ENCODE measurements at regions of chr9 and their contacts with region 1.

Region 1: DNA sequence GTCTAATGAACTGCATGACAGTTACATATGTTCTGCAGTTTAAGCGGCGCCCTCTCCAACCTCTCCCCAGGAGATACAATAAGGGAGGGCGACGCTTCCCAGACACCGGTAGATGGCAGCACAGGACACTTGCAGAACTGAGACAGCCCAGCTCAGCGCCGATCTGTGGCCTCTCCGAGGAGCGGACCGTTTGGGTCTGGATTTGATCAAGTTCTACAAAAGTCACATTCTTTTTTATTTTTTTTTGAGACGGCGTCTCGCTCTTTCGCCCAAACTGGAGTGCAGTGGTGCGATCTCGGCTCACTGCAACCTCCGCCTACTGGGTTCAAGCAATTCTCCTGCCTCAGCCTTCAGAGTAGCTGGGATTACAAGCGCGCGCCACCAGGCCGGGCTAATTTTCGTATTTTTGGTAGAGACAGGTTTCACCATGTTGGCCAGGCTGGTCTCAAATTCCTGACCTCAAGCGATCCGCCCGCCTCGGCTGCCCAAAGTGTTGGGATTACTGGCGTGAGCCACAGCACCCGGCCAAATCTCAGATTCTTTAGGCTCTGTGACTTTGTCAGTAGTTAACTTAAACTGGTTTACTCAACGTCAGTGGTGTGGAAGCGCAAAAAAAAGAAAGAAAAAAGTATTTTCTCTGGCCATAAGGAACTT is 1.4 kb upstream of the ATOSB start:
- DNase-seq: peak; percentile 67 to 91 (median 87)
- ATAC-seq: peak; percentile 77
- H3K4me3 ChIP-seq: peak overlapping the region; percentile 82
- H3K4me3 Mint-ChIP-seq: peak overlapping the region; percentile 88 to 100 (median 93)
- H3K27ac ChIP-seq: peak overlapping the region; percentile 79
- H3K27ac Mint-ChIP-seq: peak overlapping the region; percentile 89 to 98 (median 94)
- H3K4me1 ChIP-seq: peaks cover 26 to 33% of the 10 kb centered on the region in 2 donors
- H3K4me1 Mint-ChIP-seq: peaks cover 27 to 43% (median 41%) of the 10 kb centered on the region in 7 donors
- H3K27me3 ChIP-seq: no peaks in the 10 kb centered on the region
- H3K27me3 Mint-ChIP-seq: peaks cover 0 to 6% (median 0%) of the 10 kb centered on the region in 5 donors

Region 2: DNA sequence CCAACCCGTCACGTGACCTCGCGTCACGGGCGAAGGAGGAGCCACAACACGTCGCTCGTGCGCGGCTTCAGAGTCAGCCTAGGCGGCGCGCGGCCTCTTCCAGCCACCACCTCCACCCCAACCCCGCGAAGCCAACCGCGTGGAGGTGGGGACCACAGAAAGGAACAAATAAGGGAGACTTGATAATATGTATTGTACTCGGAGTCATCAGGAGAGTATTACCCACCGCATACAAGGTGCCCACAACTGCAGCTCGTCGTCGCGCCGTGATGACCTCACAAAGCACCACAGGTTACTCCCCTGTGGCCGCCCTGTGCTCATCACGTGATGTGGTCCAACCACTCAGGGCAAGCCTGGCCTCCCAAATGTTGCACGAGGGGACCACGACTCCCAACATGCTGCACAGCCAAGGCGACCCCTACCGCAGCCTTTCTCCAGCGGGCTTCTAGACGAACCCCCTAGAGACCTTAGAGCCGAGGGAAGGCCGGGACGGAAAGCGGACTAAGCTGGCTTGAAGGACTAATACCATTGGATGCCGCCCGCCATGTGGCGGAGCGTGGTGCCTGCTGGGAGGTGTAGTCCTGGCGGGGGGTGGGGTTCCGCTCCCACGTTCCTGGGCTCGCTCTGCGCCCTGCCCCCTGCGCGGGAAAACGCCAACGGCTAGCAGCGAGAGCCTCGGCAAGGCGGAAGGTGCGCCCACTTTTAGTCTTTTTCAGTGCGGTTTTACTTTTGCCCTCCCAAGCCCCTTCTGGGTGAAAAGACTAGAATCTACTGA is 1067.9 kb before region 1 on chr9:
- CTCF ChIA-PET with region 1: no interaction called
- POLR2A ChIA-PET with region 1: no interaction called
- intact Hi-C with region 1: loop called in 1 of 2 experiments (anchors 10 kb)
- DNase-seq: peak; percentile 96 to 99 (median 97)
- ATAC-seq: peak; percentile 93
- H3K4me3 ChIP-seq: peak overlapping the region; percentile 98
- H3K4me3 Mint-ChIP-seq: peak overlapping the region; percentile 96 to 100 (median 98)
- H3K27ac ChIP-seq: peak overlapping the region; percentile 86
- H3K27ac Mint-ChIP-seq: peak overlapping the region; percentile 98 to 100 (median 99)
- H3K4me1 ChIP-seq: peaks cover 11 to 22% of the 10 kb centered on the region in 2 donors
- H3K4me1 Mint-ChIP-seq: peaks cover 25 to 55% (median 31%) of the 10 kb centered on the region in 7 donors
- H3K27me3 ChIP-seq: no peaks in the 10 kb centered on the region
- H3K27me3 Mint-ChIP-seq: peaks cover 0 to 4% (median 0%) of the 10 kb centered on the region in 5 donors

Region 3: DNA sequence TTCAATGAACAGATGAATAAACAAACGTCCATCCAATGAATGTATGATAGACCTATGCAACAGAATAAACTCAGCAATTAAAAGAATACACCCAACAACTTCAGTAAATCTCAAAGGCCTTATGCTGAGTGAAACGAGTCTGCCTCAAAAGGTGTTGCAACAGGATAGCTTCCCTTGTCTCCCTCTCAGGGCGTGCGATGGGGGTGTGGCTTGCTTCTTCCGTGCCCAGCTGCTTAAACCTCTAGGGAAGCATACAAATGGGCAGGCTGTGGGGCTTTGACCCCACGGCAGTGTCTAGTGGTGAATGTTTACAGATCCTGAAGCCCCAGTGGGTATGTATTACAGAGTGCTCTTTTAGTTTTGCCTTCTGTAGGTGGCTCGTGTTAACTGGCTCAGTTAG is 320.1 kb before region 1 on chr9:
- CTCF ChIA-PET with region 1: no interaction called
- POLR2A ChIA-PET with region 1: no interaction called
- intact Hi-C with region 1: no loop called
- DNase-seq: no peak
- ATAC-seq: no peak
- H3K4me3 ChIP-seq: no peak overlapping the region
- H3K4me3 Mint-ChIP-seq: no peak overlapping the region
- H3K27ac ChIP-seq: no peak overlapping the region
- H3K27ac Mint-ChIP-seq: no peak overlapping the region
- H3K4me1 ChIP-seq: no peaks in the 10 kb centered on the region
- H3K4me1 Mint-ChIP-seq: no peaks in the 10 kb centered on the region
- H3K27me3 ChIP-seq: no peaks in the 10 kb centered on the region
- H3K27me3 Mint-ChIP-seq: peaks cover 24 to 72% (median 63%) of the 10 kb centered on the region in 5 donors

Region 4: DNA sequence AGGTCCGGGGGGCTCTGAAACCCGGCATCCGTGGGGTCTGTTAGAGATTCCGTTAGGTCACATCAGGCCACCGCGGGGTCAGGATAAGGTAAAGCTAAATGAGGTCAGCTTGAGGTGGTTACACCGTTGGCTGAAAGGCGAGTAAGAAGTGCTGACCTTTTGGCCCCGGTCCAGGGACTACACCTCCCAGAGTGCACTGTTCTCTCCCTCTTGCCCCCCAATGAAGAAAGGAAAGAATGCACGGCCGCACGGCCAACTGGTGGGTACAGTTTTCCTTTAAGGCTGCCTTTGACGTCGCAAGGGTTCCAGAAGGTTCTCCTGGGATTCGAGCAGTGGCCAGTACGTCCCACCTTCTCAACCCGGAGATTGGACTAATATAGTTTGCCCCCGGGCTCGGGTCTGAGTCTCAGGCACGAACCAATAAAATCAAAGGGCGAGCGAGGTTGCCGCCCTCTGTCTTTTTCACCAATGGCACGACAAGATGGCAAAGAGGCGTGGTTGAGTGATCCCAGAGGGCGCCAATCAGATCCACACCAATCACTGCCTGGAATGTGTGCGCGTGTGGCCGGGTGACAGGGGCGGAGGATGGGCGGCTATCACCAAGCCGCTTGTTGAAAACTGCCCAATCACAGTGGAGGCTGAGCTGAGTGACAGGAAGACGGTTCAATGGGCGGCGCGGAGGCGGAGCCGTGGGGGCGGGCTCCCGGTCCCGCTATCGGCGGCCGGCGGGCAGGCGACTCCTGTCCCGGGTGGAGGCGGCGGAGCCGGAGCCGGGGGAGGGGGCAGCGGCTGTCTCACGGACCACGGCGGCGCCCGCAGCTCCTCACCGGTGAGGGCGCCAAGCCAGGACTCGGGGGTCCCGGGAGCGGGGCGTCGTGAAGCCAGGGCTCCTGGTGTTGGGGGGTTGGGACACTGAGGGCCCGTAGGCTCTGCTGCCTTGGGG is 127.8 kb before region 1 on chr9 and contains the start of gene DNAJB5:
- CTCF ChIA-PET with region 1: interaction called, 3 read pairs
- POLR2A ChIA-PET with region 1: no interaction called
- intact Hi-C with region 1: loop called (anchors 1 kb)
- DNase-seq: peak; percentile 96 to 98 (median 97)
- ATAC-seq: peak; percentile 96
- H3K4me3 ChIP-seq: peak within 1 kb of the TSS; percentile 77
- H3K4me3 Mint-ChIP-seq: peak within 1 kb of the TSS; percentile 85 to 100 (median 96)
- H3K27ac ChIP-seq: peak within 1 kb of the TSS; percentile 77
- H3K27ac Mint-ChIP-seq: peak within 1 kb of the TSS; percentile 64 to 94 (median 89)
- H3K4me1 ChIP-seq: peaks cover 19 to 37% of the 10 kb centered on the region in 2 donors
- H3K4me1 Mint-ChIP-seq: peaks cover 35 to 62% (median 49%) of the 10 kb centered on the region in 7 donors
- H3K27me3 ChIP-seq: no peaks in the 10 kb centered on the region
- H3K27me3 Mint-ChIP-seq: no peaks in the 10 kb centered on the region
- total RNA-seq, gene DNAJB5: 1.1 to 3.7 (median 1.4) TPM

Region 5: DNA sequence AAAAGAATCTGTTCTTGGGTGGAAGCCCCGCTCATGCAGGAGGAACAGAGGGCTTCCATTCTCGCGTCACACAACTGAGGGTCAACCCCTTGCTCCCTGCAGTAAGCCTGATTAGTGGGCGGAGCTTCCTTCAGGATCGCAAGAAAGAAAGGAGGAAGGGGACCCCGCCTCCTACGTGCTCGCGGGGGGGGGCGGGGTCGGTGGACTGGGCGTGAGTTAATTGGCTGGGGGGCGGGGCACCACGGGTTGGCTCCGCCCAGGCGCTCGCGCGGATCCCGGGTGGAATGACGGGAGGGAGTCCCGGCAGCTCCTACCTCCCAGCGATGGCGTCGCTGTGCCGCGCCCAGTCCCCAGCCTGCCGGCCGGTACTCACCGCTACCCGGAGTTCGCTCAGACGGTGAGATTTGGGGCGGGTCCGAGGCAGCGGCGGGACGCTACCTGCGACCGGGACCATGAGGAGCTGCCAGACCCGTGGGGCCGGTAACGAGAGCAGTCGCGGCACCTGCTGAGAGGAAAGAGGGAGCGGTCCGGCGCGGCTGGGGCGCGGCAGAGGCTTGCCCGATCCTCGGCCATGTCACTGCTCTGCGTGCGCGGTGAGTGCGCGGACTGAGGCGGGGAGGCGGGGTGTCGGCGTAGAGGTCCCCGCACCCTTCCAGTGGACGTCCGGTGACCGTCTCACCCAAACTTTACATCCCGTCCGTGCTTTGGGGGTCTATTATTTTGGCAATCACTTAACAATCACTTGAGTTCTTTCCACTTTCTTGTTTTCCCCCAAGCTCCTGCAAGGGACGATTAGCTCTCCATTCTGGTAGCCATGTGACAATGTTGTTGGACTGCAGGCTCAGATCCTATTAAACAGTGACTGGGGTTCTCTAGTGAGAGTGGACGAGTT is 44.9 kb after region 1 on chr9 and contains the start of gene UNC13B:
- CTCF ChIA-PET with region 1: no interaction called
- POLR2A ChIA-PET with region 1: no interaction called
- intact Hi-C with region 1: loop called (anchors 1 to 2 kb)
- DNase-seq: peak; percentile 46 to 75 (median 60)
- ATAC-seq: peak; percentile 94
- H3K4me3 ChIP-seq: peak within 1 kb of the TSS; percentile 57
- H3K4me3 Mint-ChIP-seq: peak within 1 kb of the TSS; percentile 91 to 97 (median 93)
- H3K27ac ChIP-seq: peak within 1 kb of the TSS; percentile 9
- H3K27ac Mint-ChIP-seq: peak within 1 kb of the TSS in 8 of 9 donors; percentile 17 to 86 (median 48)
- H3K4me1 ChIP-seq: no peaks in the 10 kb centered on the region
- H3K4me1 Mint-ChIP-seq: peaks cover 0 to 40% (median 32%) of the 10 kb centered on the region in 7 donors
- H3K27me3 ChIP-seq: no peaks in the 10 kb centered on the region
- H3K27me3 Mint-ChIP-seq: peaks cover 0 to 31% (median 0%) of the 10 kb centered on the region in 5 donors
- total RNA-seq, gene UNC13B: 0.24 to 1.6 (median 1.3) TPM

Region 6: DNA sequence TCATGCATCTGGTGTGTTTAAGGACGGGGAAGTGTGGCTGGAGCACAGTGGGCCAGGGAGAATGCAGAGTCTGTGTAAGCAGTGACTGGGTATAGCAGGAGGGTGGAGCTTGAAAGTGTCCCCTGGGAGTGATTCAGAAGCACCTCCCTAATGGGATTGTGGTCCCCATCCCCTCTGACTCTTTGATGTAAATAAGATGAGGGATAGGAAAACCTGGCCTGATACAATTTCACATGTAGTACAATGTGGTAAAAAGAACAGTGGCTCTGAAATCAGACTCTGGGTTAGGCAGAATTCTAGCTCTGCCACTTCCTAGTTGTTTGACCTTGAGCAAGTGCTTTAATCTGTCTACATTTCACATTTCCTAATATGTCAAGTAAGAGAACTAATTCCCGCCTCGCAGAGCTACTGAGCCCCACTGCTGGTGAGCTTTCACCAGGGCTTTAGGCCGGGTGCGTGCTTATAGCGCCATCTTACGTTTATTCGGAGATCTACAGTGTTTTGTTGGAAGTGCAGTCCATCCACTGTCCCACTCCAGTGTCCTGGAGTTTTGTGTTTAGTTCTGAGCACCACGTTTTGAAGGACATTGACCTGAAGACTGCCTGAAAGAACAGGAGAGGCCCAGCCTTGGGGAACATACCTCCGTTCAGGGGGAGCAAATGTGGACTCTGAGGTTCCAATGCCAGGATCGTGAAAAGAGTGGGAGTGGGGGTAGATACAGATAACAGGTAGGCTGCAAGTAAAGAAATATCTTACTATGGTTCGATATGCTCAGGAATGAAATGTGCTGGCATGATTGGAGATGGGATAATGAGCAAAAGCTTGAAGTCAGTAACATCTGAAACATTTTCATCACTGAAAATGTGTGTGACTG is 436.9 kb after region 1 on chr9:
- CTCF ChIA-PET with region 1: interaction called, 12 read pairs
- POLR2A ChIA-PET with region 1: no interaction called
- intact Hi-C with region 1: loop called in 1 of 2 experiments (anchors 1 kb)
- DNase-seq: peak in 7 of 9 donors; percentile 17 to 51 (median 41)
- ATAC-seq: peak; percentile 89
- H3K4me3 ChIP-seq: no peak overlapping the region
- H3K4me3 Mint-ChIP-seq: no peak overlapping the region
- H3K27ac ChIP-seq: no peak overlapping the region
- H3K27ac Mint-ChIP-seq: no peak overlapping the region
- H3K4me1 ChIP-seq: no peaks in the 10 kb centered on the region
- H3K4me1 Mint-ChIP-seq: peaks cover 0 to 3% (median 0%) of the 10 kb centered on the region in 7 donors
- H3K27me3 ChIP-seq: no peaks in the 10 kb centered on the region
- H3K27me3 Mint-ChIP-seq: peaks cover 0 to 2% (median 0%) of the 10 kb centered on the region in 5 donors

Region 7: GRCh38 chr9:35814841-35815543 is 698.0 kb after region 1 on chr9 and contains the start of gene HINT2:
- CTCF ChIA-PET with region 1: no interaction called
- POLR2A ChIA-PET with region 1: no interaction called
- intact Hi-C with region 1: loop called in 1 of 2 experiments (anchors 1 kb)
- DNase-seq: peak; percentile 84 to 98 (median 96)
- ATAC-seq: peak; percentile 86
- H3K4me3 ChIP-seq: peak within 1 kb of the TSS; percentile 100
- H3K4me3 Mint-ChIP-seq: peak within 1 kb of the TSS; percentile 91 to 100 (median 96)
- H3K27ac ChIP-seq: peak within 1 kb of the TSS; percentile 77
- H3K27ac Mint-ChIP-seq: peak within 1 kb of the TSS; percentile 87 to 99 (median 95)
- H3K4me1 ChIP-seq: peaks cover 19 to 27% of the 10 kb centered on the region in 2 donors
- H3K4me1 Mint-ChIP-seq: peaks cover 23 to 43% (median 38%) of the 10 kb centered on the region in 7 donors
- H3K27me3 ChIP-seq: no peaks in the 10 kb centered on the region
- H3K27me3 Mint-ChIP-seq: peaks cover 0 to 12% (median 0%) of the 10 kb centered on the region in 5 donors
- total RNA-seq, gene HINT2: 14.3 to 50.7 (median 22.2) TPM